ENCODE measurements at regions of chr9 and their contacts with region 1.

Region 1: DNA sequence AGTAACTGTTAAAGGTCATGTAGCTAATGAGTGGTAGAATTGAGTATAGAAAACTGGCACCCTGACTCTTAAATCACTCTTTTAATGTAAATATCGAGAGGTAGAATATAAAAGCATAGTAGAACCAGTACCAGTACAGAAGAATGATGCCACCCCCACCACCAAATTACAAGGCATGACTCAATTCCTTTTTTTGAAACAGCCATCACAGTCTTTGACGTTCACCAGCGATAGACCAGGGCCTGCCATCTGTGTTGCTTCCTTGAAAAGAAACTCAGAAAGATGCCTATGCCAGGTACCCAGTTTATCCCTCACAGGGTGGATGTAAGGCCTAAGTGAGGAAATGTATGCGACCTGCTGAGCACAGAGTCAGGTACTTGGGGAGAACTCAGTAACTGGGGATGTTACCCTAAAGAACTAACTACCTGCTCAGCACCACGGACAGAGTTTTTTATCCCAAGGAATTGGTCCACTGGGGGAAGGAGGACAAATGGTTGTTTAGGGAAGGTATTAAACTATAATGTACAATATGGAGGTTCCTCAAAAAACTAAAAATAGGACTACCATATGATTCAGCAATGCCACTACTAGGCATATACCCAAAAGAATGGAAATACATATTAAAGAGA is 116.5 kb downstream of the BRINP1 start:
- DNase-seq: no peak
- H3K4me3 ChIP-seq: no peak overlapping the region
- H3K27ac ChIP-seq: no peak overlapping the region
- H3K4me1 ChIP-seq: no peaks in the 10 kb centered on the region
- H3K27me3 ChIP-seq: no peaks in the 10 kb centered on the region
- CTCF ChIP-seq: no peak
- POLR2A ChIP-seq: no peak

Region 2: DNA sequence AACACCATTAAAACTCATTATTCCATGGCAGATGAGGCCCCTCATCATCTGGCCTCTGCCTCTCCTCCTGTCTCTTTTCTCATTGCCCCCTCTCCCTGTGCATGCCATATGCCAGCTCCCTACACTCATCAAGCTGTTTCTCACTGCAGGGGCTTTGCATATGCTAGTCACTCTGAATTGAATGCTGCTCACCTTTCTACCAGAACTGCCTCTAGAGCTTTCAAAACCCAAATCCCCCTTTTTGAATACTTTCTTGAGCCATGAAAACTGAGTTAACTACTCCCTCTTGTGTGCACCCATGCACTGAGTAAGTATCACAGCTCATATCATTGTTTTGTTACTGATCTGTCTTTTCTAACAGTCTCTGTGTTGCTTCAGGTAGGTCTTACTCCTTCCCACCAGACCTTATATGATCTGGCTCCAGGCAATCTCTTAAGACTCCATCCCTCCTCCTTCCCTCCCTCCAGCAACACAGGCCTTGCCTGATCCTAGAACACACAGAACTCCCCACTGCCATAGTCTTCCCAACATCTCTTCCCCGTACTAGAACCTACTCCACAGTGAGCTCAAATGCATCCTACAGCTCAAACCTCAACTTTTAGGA is 1898.4 kb before region 1 on chr9:
- intact Hi-C with region 1: loop called (anchors 5 kb)
- DNase-seq: no peak
- H3K4me3 ChIP-seq: no peak overlapping the region
- H3K27ac ChIP-seq: no peak overlapping the region
- H3K4me1 ChIP-seq: no peaks in the 10 kb centered on the region
- H3K27me3 ChIP-seq: no peaks in the 10 kb centered on the region
- CTCF ChIP-seq: no peak
- POLR2A ChIP-seq: no peak

Region 3: GRCh38 chr9:117487555-117488175 is 1765.1 kb before region 1 on chr9:
- intact Hi-C with region 1: no loop called
- DNase-seq: peak; percentile 34 to 71
- H3K4me3 ChIP-seq: peak overlapping the region in 2 of 3 donors; percentile 11 to 44
- H3K27ac ChIP-seq: no peak overlapping the region
- H3K4me1 ChIP-seq: no peaks in the 10 kb centered on the region
- H3K27me3 ChIP-seq: peaks cover 0 to 3% of the 10 kb centered on the region in 2 donors
- CTCF ChIP-seq: peak; percentile 44 to 78 (median 77)
- POLR2A ChIP-seq: no peak

Region 4: GRCh38 chr9:119213471-119213870 is 39.3 kb before region 1 on chr9:
- intact Hi-C with region 1: no loop called
- DNase-seq: no peak
- H3K4me3 ChIP-seq: no peak overlapping the region
- H3K27ac ChIP-seq: no peak overlapping the region
- H3K4me1 ChIP-seq: no peaks in the 10 kb centered on the region
- H3K27me3 ChIP-seq: no peaks in the 10 kb centered on the region
- CTCF ChIP-seq: no peak
- POLR2A ChIP-seq: no peak

Region 5: DNA sequence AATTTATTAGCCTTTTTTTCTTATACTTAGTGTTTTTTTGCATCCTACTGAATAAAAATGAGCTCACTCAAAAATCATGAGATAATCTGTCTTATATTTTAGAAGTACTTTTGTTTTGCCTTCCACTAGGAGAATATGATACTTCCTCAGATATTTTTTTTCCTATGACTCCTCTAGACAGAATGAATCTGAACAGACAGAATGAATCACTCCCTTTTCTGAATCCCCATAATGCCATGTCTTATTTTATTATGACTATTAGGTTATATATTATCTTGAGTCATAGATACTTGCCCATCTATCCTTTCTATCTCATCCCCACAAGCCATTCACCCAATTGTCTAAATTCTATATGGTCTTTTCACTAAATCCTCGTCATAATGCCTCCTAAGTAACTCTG is 18.1 kb before region 1 on chr9:
- intact Hi-C with region 1: loop called (anchors 1 kb)
- DNase-seq: no peak
- H3K4me3 ChIP-seq: no peak overlapping the region
- H3K27ac ChIP-seq: no peak overlapping the region
- H3K4me1 ChIP-seq: no peaks in the 10 kb centered on the region
- H3K27me3 ChIP-seq: no peaks in the 10 kb centered on the region
- CTCF ChIP-seq: no peak
- POLR2A ChIP-seq: no peak

Measured in breast epithelium (tissue), 4 donors.